Dorsolateral prefrontal cortex (tissue), 120 donors: ENCODE measurements at regions of chrX and their contacts with region 1.

Region 1: GRCh38 chrX:130060122-130061069 is 49.9 kb downstream of the ELF4 start:
- DNase-seq: peak; percentile 48 to 88 (median 64)
- H3K4me3 ChIP-seq: peak overlapping the region; percentile 24 to 68 (median 57)
- H3K27ac ChIP-seq: peak overlapping the region in 16 of 59 donors; percentile 4 to 68 (median 40)
- H3K27me3 ChIP-seq: peaks cover 0 to 49% (median 8%) of the 10 kb centered on the region in 45 donors
- CTCF ChIP-seq: peak; percentile 69 to 96 (median 88)

Region 2: DNA sequence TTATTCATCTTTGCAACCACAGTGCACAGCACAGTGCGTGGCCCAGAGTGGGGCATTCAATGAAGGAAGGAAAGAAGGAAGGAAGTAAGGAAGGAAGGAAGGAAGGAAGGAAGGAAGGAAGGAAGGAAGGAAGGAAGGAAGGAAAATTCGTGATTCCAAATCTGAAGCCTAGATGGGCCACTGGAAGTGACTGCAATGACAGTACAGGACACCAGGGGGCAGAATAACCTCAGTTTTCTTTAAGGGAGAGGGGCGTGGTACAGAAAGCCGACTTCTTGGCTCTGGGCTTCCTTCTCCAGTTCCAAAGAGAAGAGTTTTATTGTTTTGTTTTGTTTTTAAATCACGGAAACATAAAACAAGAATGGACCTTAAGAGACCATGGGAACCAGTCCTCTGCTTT is 453.5 kb before region 1 on chrX:
- intact Hi-C with region 1: loop called (anchors 2 to 5 kb)
- DNase-seq: peak in 5 of 10 donors; percentile 41 to 58 (median 54)
- H3K4me3 ChIP-seq: no peak overlapping the region
- H3K27ac ChIP-seq: no peak overlapping the region
- H3K27me3 ChIP-seq: peaks cover 0 to 72% (median 14%) of the 10 kb centered on the region in 45 donors
- CTCF ChIP-seq: peak; percentile 29 to 92 (median 83)

Region 3: DNA sequence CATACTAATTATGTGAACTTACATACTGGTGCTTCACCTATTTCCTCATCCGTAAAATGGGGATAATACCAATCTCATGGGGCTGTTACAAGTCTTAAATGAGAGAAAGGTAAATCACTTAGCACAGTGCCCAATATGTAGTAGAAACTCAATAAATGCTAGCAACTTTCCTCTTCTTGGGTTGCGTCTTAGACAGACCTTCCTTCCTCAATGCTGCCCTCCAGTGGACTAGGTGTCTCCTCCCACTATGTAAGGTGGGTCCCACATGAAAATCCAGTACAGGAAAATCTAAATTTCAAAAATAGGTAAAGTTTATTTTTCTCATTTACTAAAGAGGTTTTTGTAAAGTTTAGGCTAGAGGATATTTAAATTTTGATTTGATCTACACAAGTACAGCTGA is 237.3 kb before region 1 on chrX:
- intact Hi-C with region 1: no loop called
- DNase-seq: peak in 1 of 10 donors; percentile 11
- H3K4me3 ChIP-seq: no peak overlapping the region
- H3K27ac ChIP-seq: peak overlapping the region in 31 of 59 donors; percentile 7 to 96 (median 44)
- H3K27me3 ChIP-seq: peaks cover 0 to 5% (median 0%) of the 10 kb centered on the region in 45 donors
- CTCF ChIP-seq: peak in 52 of 56 donors; percentile 24 to 69 (median 51)

Region 4: GRCh38 chrX:130401415-130402207 is 341.2 kb after region 1 on chrX and contains the start of gene RBMX2:
- intact Hi-C with region 1: no loop called
- DNase-seq: peak; percentile 49 to 81 (median 64)
- H3K4me3 ChIP-seq: peak within 1 kb of the TSS; percentile 44 to 84 (median 69)
- H3K27ac ChIP-seq: peak within 1 kb of the TSS in 49 of 59 donors; percentile 2 to 89 (median 66)
- H3K27me3 ChIP-seq: peaks cover 0 to 49% (median 16%) of the 10 kb centered on the region in 45 donors
- CTCF ChIP-seq: peak in 17 of 56 donors; percentile 6 to 42 (median 18)
- total RNA-seq, gene RBMX2: 16.6 to 38.3 (median 24.8) TPM